ENCODE measurements at regions of chr9 and their contacts with region 1.

Region 1: DNA sequence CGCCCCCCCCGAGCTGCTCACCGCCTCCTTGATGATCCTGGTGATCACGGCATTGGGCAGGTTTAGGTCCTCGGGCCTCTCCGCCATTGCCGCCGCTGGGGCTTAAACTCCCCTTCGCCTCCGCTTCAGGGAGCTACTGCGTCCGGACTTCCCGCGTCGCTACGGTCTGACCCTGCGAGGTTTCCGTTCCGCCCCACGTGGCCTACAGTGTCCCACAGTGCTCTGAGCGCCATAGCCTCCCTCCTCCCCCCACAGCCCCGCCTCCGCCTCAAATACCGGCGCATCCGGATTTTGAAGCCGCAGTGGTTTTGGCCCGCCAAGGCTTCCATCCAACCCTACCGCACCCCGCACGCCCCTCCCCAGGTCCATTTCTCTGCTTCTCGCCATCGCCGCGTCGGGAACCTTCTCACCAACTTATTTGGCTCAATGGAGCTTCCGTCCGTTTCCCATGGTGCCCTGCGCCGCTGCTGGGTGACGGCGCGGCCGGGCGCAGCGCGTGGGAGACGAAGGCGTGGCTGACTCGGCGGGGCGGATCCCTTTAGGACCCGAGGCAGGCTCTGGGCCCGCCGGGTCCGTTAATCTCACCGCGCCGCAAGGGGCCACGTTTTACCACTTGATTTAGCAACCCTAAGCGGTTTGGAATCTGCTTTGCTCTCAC is at the starts of genes C9orf43 and POLE3:
- DNase-seq: peak; percentile 89
- H3K4me3 Mint-ChIP-seq: peak within 1 kb of the TSS; percentile 95
- H3K27ac Mint-ChIP-seq: peak within 1 kb of the TSS; percentile 97
- H3K4me1 Mint-ChIP-seq: peaks cover 9% of the 10 kb centered on the region
- H3K27me3 Mint-ChIP-seq: no peaks in the 10 kb centered on the region
- CTCF ChIP-seq: no peak
- total RNA-seq, gene C9orf43: 0.33 and 0.51 TPM in 2 replicates
- total RNA-seq, gene POLE3: 37.7 and 41.0 TPM in 2 replicates

Region 2: GRCh38 chr9:113309204-113309813 is 101.0 kb before region 1 on chr9:
- CTCF ChIA-PET with region 1: no interaction called
- intact Hi-C with region 1: loop called (anchors 1 kb)
- DNase-seq: peak; percentile 20
- H3K4me3 Mint-ChIP-seq: no peak overlapping the region
- H3K27ac Mint-ChIP-seq: no peak overlapping the region
- H3K4me1 Mint-ChIP-seq: no peaks in the 10 kb centered on the region
- H3K27me3 Mint-ChIP-seq: no peaks in the 10 kb centered on the region
- CTCF ChIP-seq: peak; percentile 15

Region 3: GRCh38 chr9:113578882-113579282 is 168.5 kb after region 1 on chr9:
- CTCF ChIA-PET with region 1: no interaction called
- intact Hi-C with region 1: no loop called
- DNase-seq: peak; percentile 84
- H3K4me3 Mint-ChIP-seq: peak overlapping the region; percentile 64
- H3K27ac Mint-ChIP-seq: peak overlapping the region; percentile 89
- H3K4me1 Mint-ChIP-seq: peaks cover 54% of the 10 kb centered on the region
- H3K27me3 Mint-ChIP-seq: no peaks in the 10 kb centered on the region
- CTCF ChIP-seq: no peak